ENCODE measurements at regions of chr15 and their contacts with region 1.

Region 1: DNA sequence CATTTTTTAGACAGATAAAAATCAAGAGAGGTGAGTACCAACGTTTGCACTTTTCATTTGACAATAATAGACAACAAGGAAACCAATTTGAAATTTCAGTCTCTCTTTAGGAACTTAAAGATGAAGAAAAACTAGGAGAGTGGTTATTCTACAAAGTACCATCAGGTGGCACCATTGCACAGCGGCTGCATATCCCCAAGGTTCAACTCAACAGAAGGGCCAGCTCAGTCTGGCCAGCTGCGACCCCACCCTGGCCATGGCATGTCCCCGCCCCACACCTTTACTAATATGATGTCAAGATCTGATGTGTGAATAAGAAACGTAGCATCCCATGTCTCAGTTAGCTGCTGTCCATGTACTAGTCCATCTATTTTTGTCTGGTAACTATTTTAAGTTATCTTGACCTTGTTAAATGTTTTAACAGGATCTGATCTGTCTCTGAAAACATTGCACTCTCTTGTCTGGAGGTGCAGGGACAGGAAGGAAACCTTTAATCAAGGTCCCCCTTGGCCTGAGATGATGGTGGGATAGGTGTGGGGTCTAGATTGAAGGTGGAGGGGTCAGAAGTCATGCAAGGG is 35.5 kb upstream of the CGNL1 start:
- DNase-seq: peak in 2 of 4 donors; percentile 65 to 77
- ATAC-seq: peak; percentile 89
- H3K4me3 ChIP-seq: no peak overlapping the region
- H3K27ac ChIP-seq: no peak overlapping the region
- H3K4me1 ChIP-seq: peaks cover 0 to 14% of the 10 kb centered on the region in 2 donors
- H3K27me3 ChIP-seq: no peaks in the 10 kb centered on the region
- CTCF ChIP-seq: peak; percentile 66 to 78

Region 2: GRCh38 chr15:57522148-57522547 is 181.4 kb after region 1 on chr15:
- intact Hi-C with region 1: loop called in 1 of 2 experiments (anchors 5 kb)
- DNase-seq: no peak
- ATAC-seq: peak; percentile 16
- H3K4me3 ChIP-seq: no peak overlapping the region
- H3K27ac ChIP-seq: peak overlapping the region in 1 of 2 donors; percentile 34
- H3K4me1 ChIP-seq: peaks cover 4 to 16% of the 10 kb centered on the region in 2 donors
- H3K27me3 ChIP-seq: no peaks in the 10 kb centered on the region
- CTCF ChIP-seq: no peak

Region 3: DNA sequence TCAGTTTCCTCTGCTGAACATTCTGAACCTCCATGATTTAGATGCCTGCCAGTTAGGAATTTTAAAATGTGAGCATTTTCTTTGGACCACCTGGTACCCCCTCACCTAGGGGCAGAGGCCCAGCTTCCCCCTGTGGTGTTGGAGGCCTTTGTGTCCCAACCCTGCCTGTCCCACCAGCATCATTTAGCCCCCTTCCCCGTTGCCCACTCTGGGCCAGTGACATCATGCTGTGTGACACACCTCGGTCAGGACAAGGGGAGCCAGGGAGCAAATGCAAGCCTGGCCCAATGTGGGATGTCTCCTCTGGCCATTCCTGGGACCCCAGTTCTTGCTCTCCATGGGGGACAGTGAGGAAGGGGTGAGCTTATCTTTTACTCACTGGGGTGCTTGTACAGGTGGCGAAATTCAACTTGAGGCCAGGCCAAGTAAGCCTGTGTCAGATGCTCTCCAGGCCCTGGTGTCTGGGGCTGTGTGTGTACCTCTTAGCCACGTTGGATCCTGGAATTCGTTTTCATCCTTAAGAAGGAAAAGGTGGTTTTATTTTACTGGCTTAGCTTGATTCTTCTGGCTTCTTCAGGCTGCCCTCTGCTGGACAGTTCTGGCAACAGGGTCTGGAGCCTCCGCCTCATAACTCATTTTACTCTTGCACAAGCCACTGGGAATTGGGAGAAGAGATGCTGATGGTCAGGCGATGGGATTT is 201.2 kb after region 1 on chr15:
- intact Hi-C with region 1: loop called (anchors 5 to 10 kb)
- DNase-seq: peak in 2 of 4 donors; percentile 48 to 77
- ATAC-seq: peak; percentile 78
- H3K4me3 ChIP-seq: no peak overlapping the region
- H3K27ac ChIP-seq: no peak overlapping the region
- H3K4me1 ChIP-seq: no peaks in the 10 kb centered on the region
- H3K27me3 ChIP-seq: no peaks in the 10 kb centered on the region
- CTCF ChIP-seq: peak; percentile 62 to 76

Measured in left lung (tissue), 14 donors.